Activated CD8-positive, alpha-beta T cell treated with anti-CD3 and anti-CD28 coated beads for 36 hours (primary cell): ENCODE measurements at regions of chr19 and their contacts with region 1.

Region 1: DNA sequence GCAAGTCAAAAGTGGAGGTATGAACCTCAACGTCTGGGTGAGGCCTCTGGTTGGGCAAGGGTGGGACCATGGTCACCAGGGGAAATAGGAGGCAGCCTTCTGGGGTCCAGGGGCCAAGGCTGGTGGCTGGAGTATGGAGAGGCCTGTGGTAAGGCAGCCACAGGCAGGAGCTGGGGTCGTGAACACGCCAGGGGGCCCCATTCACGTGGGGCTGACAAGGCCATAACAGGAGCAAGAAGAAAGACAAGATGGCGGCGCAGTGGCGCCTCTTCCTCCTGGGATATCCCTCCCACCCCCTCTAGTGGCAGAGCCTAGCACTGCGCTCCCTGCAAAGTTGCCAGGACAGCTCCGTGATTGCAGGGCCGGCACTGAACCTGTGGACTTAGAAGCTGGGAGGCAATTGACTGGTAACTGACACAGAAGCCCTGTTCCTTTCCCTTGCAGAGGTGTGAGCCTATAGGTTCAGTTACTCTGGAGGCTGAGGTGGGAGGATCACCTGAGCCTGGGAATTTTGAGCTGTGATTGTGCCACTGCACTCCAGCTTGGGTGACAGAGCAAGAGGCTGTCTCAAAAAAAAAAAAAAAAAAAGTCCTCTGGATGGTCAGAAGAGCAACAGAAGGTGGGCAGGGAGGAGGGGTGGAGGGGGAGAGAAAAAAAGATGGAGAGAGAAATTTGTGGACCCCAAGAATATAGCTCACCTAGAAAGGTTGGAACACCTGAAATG is 19.7 kb upstream of the EDDM13 start:
- DNase-seq: peak; percentile 90
- ATAC-seq: peak; percentile 97
- H3K4me3 Mint-ChIP-seq: no peak overlapping the region
- H3K27ac Mint-ChIP-seq: no peak overlapping the region
- H3K4me1 Mint-ChIP-seq: no peaks in the 10 kb centered on the region
- H3K27me3 Mint-ChIP-seq: no peaks in the 10 kb centered on the region
- CTCF ChIP-seq: peak; percentile 80

Region 2: DNA sequence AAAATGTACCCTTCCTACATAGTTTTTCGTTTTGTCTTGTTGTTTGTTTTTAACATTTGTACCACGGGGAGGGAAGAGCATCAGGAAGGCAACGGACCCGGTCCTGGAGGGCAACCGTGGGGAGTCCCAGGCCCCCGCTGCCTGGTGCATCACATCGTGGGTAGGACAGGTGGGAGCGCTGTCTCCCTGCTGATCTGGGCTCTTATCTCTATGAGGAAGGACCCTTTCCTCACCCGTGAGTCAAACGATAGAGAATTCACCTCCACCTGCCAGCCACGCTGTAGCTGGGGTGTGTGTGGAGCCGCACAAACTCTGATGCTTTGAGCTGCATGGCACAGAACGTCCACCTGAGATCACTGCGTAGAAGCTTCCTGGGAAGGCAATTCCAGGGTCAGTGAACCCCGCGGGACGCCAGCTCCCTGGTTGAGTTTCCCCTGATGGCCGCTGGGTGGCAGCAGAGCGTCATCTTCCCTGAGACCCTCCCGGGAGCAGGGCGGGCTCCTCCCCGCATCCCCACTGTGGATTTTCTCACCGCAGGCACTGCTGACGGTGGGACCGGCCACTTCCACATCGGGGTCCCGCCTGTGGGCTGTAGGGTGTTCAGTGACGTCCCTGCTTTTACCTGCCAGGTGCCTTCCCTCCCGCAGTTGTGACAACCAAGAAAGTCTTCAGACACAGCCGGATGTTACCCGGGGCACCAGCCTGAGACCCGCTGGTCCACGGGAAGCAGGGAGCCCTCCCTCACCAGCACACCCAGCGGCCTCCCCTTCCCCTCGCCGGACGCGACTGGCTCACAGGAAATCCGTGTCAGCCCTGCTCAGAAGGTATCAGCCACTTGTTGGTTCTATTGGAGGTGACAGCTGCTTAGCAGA is 186.5 kb before region 1 on chr19:
- CTCF ChIA-PET with region 1: interaction called, 29 read pairs
- POLR2A ChIA-PET with region 1: no interaction called
- intact Hi-C with region 1: loop called (anchors 5 kb)
- DNase-seq: peak; percentile 65
- ATAC-seq: peak; percentile 84
- H3K4me3 Mint-ChIP-seq: peak overlapping the region; percentile 54
- H3K27ac Mint-ChIP-seq: no peak overlapping the region
- H3K4me1 Mint-ChIP-seq: peaks cover 11% of the 10 kb centered on the region
- H3K27me3 Mint-ChIP-seq: peaks cover 25% of the 10 kb centered on the region
- CTCF ChIP-seq: peak; percentile 99

Region 3: DNA sequence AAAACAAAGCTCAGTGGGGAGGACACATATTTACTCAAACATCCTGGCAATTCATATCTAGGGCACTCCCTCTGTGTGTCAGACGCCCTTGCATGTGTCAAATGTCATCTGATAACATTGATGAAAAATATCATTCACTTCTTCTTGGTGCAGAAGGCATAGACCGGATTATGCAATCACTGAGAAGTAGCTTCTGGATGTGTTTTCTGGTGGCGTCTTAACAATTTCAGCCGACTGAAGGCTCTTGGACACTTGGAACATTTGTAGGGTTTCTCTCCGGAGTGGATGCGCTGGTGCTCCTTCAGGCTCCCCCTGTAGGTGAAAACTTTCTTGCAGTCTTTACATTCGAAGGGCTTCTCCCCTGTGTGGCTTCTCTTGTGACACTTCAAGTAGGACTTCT is 31.5 kb before region 1 on chr19:
- CTCF ChIA-PET with region 1: interaction called, 10 read pairs
- POLR2A ChIA-PET with region 1: no interaction called
- intact Hi-C with region 1: no loop called
- DNase-seq: no peak
- ATAC-seq: no peak
- H3K4me3 Mint-ChIP-seq: no peak overlapping the region
- H3K27ac Mint-ChIP-seq: no peak overlapping the region
- H3K4me1 Mint-ChIP-seq: no peaks in the 10 kb centered on the region
- H3K27me3 Mint-ChIP-seq: peaks cover 6% of the 10 kb centered on the region
- CTCF ChIP-seq: no peak

Region 4: GRCh38 chr19:56301182-56301581 is 48.3 kb after region 1 on chr19:
- CTCF ChIA-PET with region 1: interaction called, 11 read pairs
- POLR2A ChIA-PET with region 1: no interaction called
- intact Hi-C with region 1: no loop called
- DNase-seq: peak; percentile 8
- ATAC-seq: no peak
- H3K4me3 Mint-ChIP-seq: no peak overlapping the region
- H3K27ac Mint-ChIP-seq: no peak overlapping the region
- H3K4me1 Mint-ChIP-seq: peaks cover 18% of the 10 kb centered on the region
- H3K27me3 Mint-ChIP-seq: no peaks in the 10 kb centered on the region
- CTCF ChIP-seq: peak; percentile 19

Region 5: GRCh38 chr19:56333505-56333904 is 80.6 kb after region 1 on chr19:
- CTCF ChIA-PET with region 1: interaction called, 37 read pairs
- POLR2A ChIA-PET with region 1: interaction called, 3 read pairs
- intact Hi-C with region 1: no loop called
- DNase-seq: peak; percentile 61
- ATAC-seq: peak; percentile 62
- H3K4me3 Mint-ChIP-seq: no peak overlapping the region
- H3K27ac Mint-ChIP-seq: no peak overlapping the region
- H3K4me1 Mint-ChIP-seq: no peaks in the 10 kb centered on the region
- H3K27me3 Mint-ChIP-seq: no peaks in the 10 kb centered on the region
- CTCF ChIP-seq: peak; percentile 60